HepG2 (cell line): ENCODE measurements at regions of chr5 and their contacts with region 1.

Region 1: GRCh38 chr5:108339232-108339631 is 42.7 kb downstream of the FBXL17 start:
- DNase-seq: no peak
- ATAC-seq: no peak
- H3K4me3 ChIP-seq: no peak overlapping the region
- H3K27ac ChIP-seq: no peak overlapping the region
- H3K4me1 ChIP-seq: no peaks in the 10 kb centered on the region
- H3K27me3 ChIP-seq: no peaks in the 10 kb centered on the region
- CTCF ChIP-seq: no peak
- EP300 ChIP-seq: no peak
- POLR2A ChIP-seq: no peak
- RAD21 ChIP-seq: no peak

Region 2: DNA sequence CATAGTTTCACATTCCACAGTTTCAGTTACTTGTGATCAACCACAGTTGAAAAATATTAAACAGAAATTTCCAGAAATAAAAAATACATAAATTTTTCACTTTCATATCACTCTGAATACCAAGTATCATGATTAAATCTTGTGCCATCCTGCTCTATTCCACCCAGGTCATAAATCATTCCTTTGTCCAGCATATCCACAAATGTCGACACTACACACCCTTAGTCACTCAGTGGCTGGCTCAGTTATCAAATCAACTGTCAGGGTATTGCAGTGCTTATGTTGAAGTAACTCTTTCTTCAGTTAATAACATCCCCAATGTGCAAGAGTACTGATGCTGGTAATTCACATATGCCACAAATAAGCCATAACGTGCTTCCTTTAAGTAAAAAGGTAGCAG is 73.0 kb before region 1 on chr5:
- CTCF ChIA-PET with region 1: no interaction called
- POLR2A ChIA-PET with region 1: no interaction called
- in situ Hi-C with region 1: loop called (anchors 5 kb)
- intact Hi-C with region 1: no loop called
- DNase-seq: no peak
- ATAC-seq: no peak
- H3K4me3 ChIP-seq: no peak overlapping the region
- H3K27ac ChIP-seq: no peak overlapping the region
- H3K4me1 ChIP-seq: no peaks in the 10 kb centered on the region
- H3K27me3 ChIP-seq: no peaks in the 10 kb centered on the region
- CTCF ChIP-seq: no peak
- EP300 ChIP-seq: no peak
- POLR2A ChIP-seq: no peak
- RAD21 ChIP-seq: no peak